Prostate gland (tissue), 2 donors: ENCODE measurements at regions of chr5 and their contacts with region 1.

Region 1: GRCh38 chr5:148998174-148998797 is 64.6 kb downstream of the SH3TC2 start:
- DNase-seq: peak; percentile 77
- H3K4me3 ChIP-seq: no peak overlapping the region
- H3K27ac ChIP-seq: no peak overlapping the region
- H3K4me1 ChIP-seq: no peaks in the 10 kb centered on the region
- H3K27me3 ChIP-seq: no peaks in the 10 kb centered on the region
- CTCF ChIP-seq: peak in 3 of 4 experiments; percentile 70 to 82 (median 76)
- POLR2A ChIP-seq: no peak

Region 2: DNA sequence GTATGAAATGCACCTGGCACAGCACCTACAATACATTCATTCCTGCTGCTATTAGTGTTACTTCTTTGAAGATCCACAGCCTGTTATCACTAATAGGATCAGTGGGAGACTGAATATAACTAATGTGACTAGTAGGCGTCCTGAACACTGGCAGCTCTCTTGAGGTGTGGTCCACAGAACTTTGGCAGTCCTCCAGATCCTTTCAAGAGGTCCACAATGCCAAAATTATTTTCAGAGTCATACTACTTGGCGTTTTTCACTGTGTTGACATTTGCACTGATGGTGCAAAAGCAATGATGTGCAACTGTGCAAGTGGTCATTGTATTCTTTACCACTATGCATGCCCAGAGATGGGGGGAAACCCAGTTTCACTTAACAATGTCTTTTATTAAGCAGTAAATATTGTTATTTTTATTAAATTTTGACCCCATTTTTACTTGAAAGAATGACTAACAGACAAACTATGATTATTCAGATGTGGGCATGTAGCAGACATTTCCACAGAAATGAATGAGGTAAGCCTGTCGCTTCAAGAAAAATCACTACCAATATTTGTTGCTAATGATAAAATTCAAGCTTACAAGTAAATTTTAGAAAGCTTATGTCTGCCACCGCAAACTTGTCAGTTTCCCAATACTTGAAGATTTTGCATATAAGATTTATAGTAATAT is 122.9 kb before region 1 on chr5:
- intact Hi-C with region 1: no loop called
- DNase-seq: no peak
- H3K4me3 ChIP-seq: no peak overlapping the region
- H3K27ac ChIP-seq: no peak overlapping the region
- H3K4me1 ChIP-seq: no peaks in the 10 kb centered on the region
- H3K27me3 ChIP-seq: no peaks in the 10 kb centered on the region
- CTCF ChIP-seq: no peak
- POLR2A ChIP-seq: no peak

Region 3: DNA sequence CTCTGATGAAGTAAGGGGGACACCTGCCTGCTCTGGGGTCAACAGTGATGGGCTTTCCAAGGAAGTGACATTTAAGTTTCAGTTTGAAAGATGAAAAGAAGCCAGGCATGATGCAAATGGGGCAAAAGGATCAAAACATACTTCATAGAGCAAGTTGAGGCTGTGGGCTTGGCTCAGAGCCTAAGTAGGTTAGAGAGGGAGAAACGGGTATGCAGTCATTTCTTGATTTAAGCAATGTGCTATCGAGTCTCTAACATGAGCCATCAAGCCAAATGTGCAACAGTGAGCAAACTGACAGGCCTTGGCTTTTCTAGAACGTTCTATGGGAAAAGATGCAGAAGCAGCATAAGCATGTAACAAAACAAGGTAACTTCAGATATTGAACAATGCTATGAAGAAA is 91.3 kb before region 1 on chr5:
- intact Hi-C with region 1: loop called (anchors 2 kb)
- DNase-seq: no peak
- H3K4me3 ChIP-seq: no peak overlapping the region
- H3K27ac ChIP-seq: no peak overlapping the region
- H3K4me1 ChIP-seq: peaks cover 14% of the 10 kb centered on the region
- H3K27me3 ChIP-seq: no peaks in the 10 kb centered on the region
- CTCF ChIP-seq: no peak
- POLR2A ChIP-seq: no peak

Region 4: DNA sequence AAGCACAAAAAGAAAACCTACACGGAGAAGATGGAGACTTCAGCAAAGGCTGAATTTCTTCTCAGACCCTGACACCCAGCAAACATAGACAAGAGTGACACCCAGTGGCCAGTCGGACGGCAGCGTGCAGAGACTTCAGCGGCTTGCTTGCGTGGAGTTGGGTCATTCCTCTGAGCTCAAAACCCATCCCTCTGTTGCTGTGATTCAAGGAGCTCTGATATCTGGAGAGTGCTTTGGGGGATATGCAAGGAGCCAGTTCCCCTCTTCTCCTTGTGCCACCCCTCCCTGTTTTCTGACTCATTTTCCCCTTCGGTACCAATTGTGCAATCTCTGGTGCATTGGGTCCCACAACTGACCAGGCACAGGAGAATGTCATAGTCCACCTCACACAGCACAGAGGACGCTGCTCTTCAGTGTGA is 37.1 kb after region 1 on chr5:
- intact Hi-C with region 1: loop called (anchors 5 kb)
- DNase-seq: peak; percentile 63
- H3K4me3 ChIP-seq: no peak overlapping the region
- H3K27ac ChIP-seq: no peak overlapping the region
- H3K4me1 ChIP-seq: no peaks in the 10 kb centered on the region
- H3K27me3 ChIP-seq: no peaks in the 10 kb centered on the region
- CTCF ChIP-seq: peak; percentile 46 to 83 (median 78)
- POLR2A ChIP-seq: no peak